ENCODE measurements at regions of chr2 and their contacts with region 1.

Region 1: GRCh38 chr2:7552825-7553570 is 635.8 kb downstream of the RNF144A start:
- DNase-seq: peak; percentile 66
- H3K4me3 Mint-ChIP-seq: peak overlapping the region; percentile 47
- H3K27ac Mint-ChIP-seq: peak overlapping the region; percentile 79
- H3K4me1 Mint-ChIP-seq: peaks cover 24% of the 10 kb centered on the region
- H3K27me3 Mint-ChIP-seq: no peaks in the 10 kb centered on the region

Region 2: GRCh38 chr2:7490672-7491071 is 62.3 kb before region 1 on chr2:
- intact Hi-C with region 1: no loop called
- DNase-seq: no peak
- H3K4me3 Mint-ChIP-seq: no peak overlapping the region
- H3K27ac Mint-ChIP-seq: no peak overlapping the region
- H3K4me1 Mint-ChIP-seq: peaks cover 2% of the 10 kb centered on the region
- H3K27me3 Mint-ChIP-seq: no peaks in the 10 kb centered on the region

Region 3: DNA sequence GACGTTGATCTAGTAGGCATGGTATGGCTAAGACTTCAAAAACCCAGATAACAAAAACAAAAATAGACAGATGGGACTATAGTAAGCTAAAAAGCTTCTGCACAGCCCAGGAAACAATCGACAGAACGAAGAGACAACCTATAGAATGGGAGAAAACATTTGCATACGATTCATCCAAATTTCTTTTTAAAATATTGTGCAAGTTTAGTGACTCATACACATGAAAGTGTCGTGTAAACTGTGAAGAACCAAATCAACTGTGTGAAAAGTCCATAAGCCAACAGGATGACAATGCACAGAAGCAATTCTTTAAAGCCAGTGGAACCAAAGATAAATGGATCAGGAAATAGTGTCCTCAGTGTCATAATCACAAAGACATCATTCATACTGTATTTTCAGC is 35.3 kb after region 1 on chr2:
- intact Hi-C with region 1: loop called (anchors 2 kb)
- DNase-seq: peak; percentile 50
- H3K4me3 Mint-ChIP-seq: peak overlapping the region; percentile 2
- H3K27ac Mint-ChIP-seq: peak overlapping the region; percentile 68
- H3K4me1 Mint-ChIP-seq: peaks cover 22% of the 10 kb centered on the region
- H3K27me3 Mint-ChIP-seq: no peaks in the 10 kb centered on the region

Measured in activated CD4-positive, alpha-beta T cell treated with anti-CD3 and anti-CD28 coated beads, Interleukin-2, amount 10 ng/mL, durations not matched to agents 24 days and 14 days (primary cell).